Activated CD8-positive, alpha-beta T cell treated with anti-CD3 and anti-CD28 coated beads for 36 hours (primary cell): ENCODE measurements at regions of chr17 and their contacts with region 1.

Region 1: DNA sequence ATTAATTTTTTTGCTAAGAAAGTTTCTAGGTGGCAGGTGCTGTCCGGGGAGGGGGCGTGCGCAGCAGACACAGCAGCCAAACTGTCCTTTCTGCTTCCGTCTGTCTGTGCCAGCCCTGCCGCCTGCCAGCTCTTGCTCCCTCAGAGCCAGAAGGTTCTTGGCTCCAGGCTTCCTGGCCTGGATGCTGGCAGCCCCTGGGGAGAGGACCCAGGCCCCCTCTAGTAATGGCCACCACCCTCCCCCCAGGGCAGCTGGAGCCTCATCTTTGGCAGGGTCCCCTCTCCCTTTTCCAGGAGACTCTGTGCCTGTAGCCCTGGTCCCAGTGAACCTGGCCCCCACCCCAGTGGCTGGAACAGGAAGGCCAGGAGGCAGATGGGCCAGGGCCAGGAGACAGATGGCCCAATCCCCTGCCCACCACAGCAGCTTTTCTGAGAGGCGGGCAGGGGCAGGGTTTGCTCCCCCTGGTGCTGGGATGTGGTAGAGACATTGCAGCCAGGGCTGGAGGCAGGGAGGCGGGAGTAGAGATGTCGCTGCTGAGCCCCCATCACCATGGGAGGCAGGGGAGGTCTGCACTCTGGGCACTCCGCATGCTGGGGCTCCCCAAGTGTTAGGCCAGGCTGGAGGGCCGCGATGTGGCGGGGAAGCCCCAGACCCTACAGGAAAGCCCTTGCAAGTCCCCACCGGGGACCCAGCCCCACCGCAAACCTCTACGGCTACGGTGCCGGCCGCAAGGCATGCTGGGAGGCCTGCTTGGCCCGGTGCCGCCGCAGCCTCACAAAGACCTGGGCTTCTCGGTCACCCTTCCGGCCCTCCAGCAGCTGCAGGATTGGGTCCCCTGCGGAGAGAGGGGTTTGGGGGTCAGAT is 16.7 kb downstream of the UNC13D start:
- DNase-seq: peak; percentile 81
- ATAC-seq: peak; percentile 69
- H3K4me3 Mint-ChIP-seq: peak overlapping the region; percentile 54
- H3K27ac Mint-ChIP-seq: peak overlapping the region; percentile 94
- H3K4me1 Mint-ChIP-seq: peaks cover 21% of the 10 kb centered on the region
- H3K27me3 Mint-ChIP-seq: no peaks in the 10 kb centered on the region
- CTCF ChIP-seq: peak; percentile 89

Region 2: GRCh38 chr17:75764711-75765421 is 62.6 kb before region 1 on chr17 and contains the start of gene GALK1:
- CTCF ChIA-PET with region 1: interaction called, 38 read pairs
- POLR2A ChIA-PET with region 1: interaction called, 3 read pairs
- intact Hi-C with region 1: no loop called
- DNase-seq: peak; percentile 81
- ATAC-seq: peak; percentile 96
- H3K4me3 Mint-ChIP-seq: peak within 1 kb of the TSS; percentile 79
- H3K27ac Mint-ChIP-seq: peak within 1 kb of the TSS; percentile 78
- H3K4me1 Mint-ChIP-seq: peaks cover 10% of the 10 kb centered on the region
- H3K27me3 Mint-ChIP-seq: no peaks in the 10 kb centered on the region
- CTCF ChIP-seq: peak; percentile 78
- total RNA-seq, gene GALK1: 43.4 to 50.7 TPM

Region 3: GRCh38 chr17:75784473-75785015 is 42.9 kb before region 1 on chr17 and contains the start of gene UNK:
- CTCF ChIA-PET with region 1: interaction called, 22 read pairs
- POLR2A ChIA-PET with region 1: interaction called, 30 read pairs
- intact Hi-C with region 1: no loop called
- DNase-seq: peak; percentile 98
- ATAC-seq: peak; percentile 71
- H3K4me3 Mint-ChIP-seq: peak within 1 kb of the TSS; percentile 93
- H3K27ac Mint-ChIP-seq: peak within 1 kb of the TSS; percentile 100
- H3K4me1 Mint-ChIP-seq: peaks cover 35% of the 10 kb centered on the region
- H3K27me3 Mint-ChIP-seq: peaks cover 2% of the 10 kb centered on the region
- CTCF ChIP-seq: no peak
- total RNA-seq, gene UNK: 26.4 to 26.6 TPM

Region 4: GRCh38 chr17:75814900-75815373 is 12.5 kb before region 1 on chr17:
- CTCF ChIA-PET with region 1: interaction called, 9 read pairs
- POLR2A ChIA-PET with region 1: interaction called, 10 read pairs
- intact Hi-C with region 1: no loop called
- DNase-seq: no peak
- ATAC-seq: no peak
- H3K4me3 Mint-ChIP-seq: no peak overlapping the region
- H3K27ac Mint-ChIP-seq: no peak overlapping the region
- H3K4me1 Mint-ChIP-seq: no peaks in the 10 kb centered on the region
- H3K27me3 Mint-ChIP-seq: no peaks in the 10 kb centered on the region
- CTCF ChIP-seq: no peak

Region 5: GRCh38 chr17:75845049-75845860 is 17.8 kb after region 1 on chr17:
- CTCF ChIA-PET with region 1: interaction called, 105 read pairs
- POLR2A ChIA-PET with region 1: interaction called, 26 read pairs
- intact Hi-C with region 1: no loop called
- DNase-seq: peak; percentile 83
- ATAC-seq: peak; percentile 72
- H3K4me3 Mint-ChIP-seq: peak overlapping the region; percentile 96
- H3K27ac Mint-ChIP-seq: peak overlapping the region; percentile 75
- H3K4me1 Mint-ChIP-seq: peaks cover 30% of the 10 kb centered on the region
- H3K27me3 Mint-ChIP-seq: no peaks in the 10 kb centered on the region
- CTCF ChIP-seq: peak; percentile 72

Region 6: GRCh38 chr17:75864448-75864871 is 37.0 kb after region 1 on chr17:
- CTCF ChIA-PET with region 1: interaction called, 11 read pairs
- POLR2A ChIA-PET with region 1: no interaction called
- intact Hi-C with region 1: no loop called
- DNase-seq: peak; percentile 71
- ATAC-seq: peak; percentile 78
- H3K4me3 Mint-ChIP-seq: no peak overlapping the region
- H3K27ac Mint-ChIP-seq: peak overlapping the region; percentile 78
- H3K4me1 Mint-ChIP-seq: peaks cover 17% of the 10 kb centered on the region
- H3K27me3 Mint-ChIP-seq: no peaks in the 10 kb centered on the region
- CTCF ChIP-seq: no peak

Region 7: DNA sequence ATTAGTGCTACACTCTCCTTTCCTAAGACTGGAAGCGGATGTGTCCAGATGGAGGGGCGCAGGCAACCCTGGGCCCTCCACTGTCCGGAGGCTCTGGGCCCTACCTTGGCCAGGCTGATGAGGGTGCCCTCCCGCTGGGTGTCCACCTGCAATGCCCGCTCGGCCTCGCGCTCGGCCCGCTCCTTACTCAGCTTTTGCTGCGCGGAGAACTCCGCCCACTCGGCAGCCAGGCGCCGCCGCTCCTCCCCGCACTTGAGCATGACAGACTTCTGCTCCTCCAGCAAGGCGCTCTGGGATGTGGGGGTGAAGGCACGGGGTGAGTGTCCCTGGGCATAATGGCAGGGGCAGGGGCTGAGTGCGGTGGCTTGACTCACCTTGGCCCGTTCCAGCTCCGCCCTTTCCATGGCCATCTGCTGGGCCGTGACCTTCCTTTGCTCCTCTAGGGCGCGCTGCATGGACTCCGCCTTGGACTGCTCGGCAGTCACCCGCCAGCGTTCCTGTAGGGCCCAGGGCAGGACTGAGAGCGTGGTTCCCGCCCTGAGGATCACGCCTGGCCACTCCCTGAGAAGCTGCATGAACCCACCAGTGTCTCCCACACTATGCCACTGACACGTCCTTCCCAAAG is 87.3 kb after region 1 on chr17:
- CTCF ChIA-PET with region 1: no interaction called
- POLR2A ChIA-PET with region 1: no interaction called
- intact Hi-C with region 1: no loop called
- DNase-seq: no peak
- ATAC-seq: no peak
- H3K4me3 Mint-ChIP-seq: no peak overlapping the region
- H3K27ac Mint-ChIP-seq: no peak overlapping the region
- H3K4me1 Mint-ChIP-seq: peaks cover 2% of the 10 kb centered on the region
- H3K27me3 Mint-ChIP-seq: no peaks in the 10 kb centered on the region
- CTCF ChIP-seq: no peak